Heart left ventricle (tissue), 16 donors: ENCODE measurements at regions of chr12 and their contacts with region 1.

Region 1: DNA sequence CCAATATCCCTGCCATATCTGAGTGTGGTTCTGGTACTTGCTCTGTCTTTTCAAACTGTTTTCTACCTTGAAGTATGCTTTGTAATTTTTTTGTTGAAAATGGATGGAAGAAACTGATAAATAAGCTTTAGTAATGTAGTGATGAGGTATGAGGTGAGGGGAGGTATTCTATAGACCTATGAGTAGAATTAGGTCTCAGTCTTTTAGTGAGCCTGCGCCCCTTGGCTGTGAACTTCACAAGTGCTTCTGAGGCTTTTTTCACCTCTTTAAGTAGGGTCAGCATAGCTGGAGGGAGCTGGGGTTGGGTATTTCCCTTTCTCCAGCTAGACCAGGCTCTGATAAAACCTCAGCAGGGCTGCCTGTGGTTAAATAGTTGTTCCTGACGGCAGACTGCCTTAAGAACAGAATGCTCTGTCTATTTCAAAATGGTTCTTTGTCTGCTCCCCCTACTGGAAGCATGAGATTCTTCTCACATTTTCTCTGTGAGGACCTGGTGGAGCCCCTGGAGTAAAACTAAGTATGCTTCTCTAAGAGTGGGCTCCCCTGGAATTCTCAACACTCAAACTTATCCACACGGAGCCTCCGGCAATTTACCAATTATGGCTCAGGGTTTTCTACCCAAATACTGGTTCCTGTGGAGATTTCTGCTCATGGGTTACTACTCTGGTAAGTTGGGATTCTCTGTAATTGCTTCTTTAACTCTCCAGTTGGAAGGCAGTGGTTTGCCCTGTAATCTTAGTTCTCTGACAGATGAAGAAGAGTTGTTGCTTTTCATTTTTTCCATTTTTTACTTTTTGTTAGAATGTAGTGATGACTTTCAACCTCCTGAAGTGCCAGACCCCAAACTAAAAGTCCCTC is 13.1 kb downstream of the KRT5 start:
- DNase-seq: no peak
- ATAC-seq: peak in 3 of 4 donors; percentile 39 to 69 (median 51)
- H3K4me3 ChIP-seq: no peak overlapping the region
- H3K27ac ChIP-seq: no peak overlapping the region
- H3K4me1 ChIP-seq: peaks cover 0 to 3% (median 0%) of the 10 kb centered on the region in 12 donors
- H3K27me3 ChIP-seq: peaks cover 0 to 29% (median 0%) of the 10 kb centered on the region in 9 donors
- CTCF ChIP-seq: peak; percentile 31 to 63 (median 49)
- POLR2A ChIP-seq: no peak

Region 2: GRCh38 chr12:52390739-52391617 is 116.1 kb before region 1 on chr12:
- intact Hi-C with region 1: loop called in 3 of 10 experiments (anchors 5 to 10 kb)
- DNase-seq: no peak
- ATAC-seq: peak in 3 of 4 donors; percentile 5 to 30 (median 8)
- H3K4me3 ChIP-seq: no peak overlapping the region
- H3K27ac ChIP-seq: no peak overlapping the region
- H3K4me1 ChIP-seq: peaks cover 0 to 14% (median 0%) of the 10 kb centered on the region in 12 donors
- H3K27me3 ChIP-seq: peaks cover 0 to 3% (median 0%) of the 10 kb centered on the region in 9 donors
- CTCF ChIP-seq: peak in 11 of 12 donors; percentile 22 to 45 (median 36)
- POLR2A ChIP-seq: no peak

Region 3: GRCh38 chr12:52561880-52562449 is 54.9 kb after region 1 on chr12:
- intact Hi-C with region 1: no loop called
- DNase-seq: no peak
- ATAC-seq: no peak
- H3K4me3 ChIP-seq: no peak overlapping the region
- H3K27ac ChIP-seq: no peak overlapping the region
- H3K4me1 ChIP-seq: peaks cover 0 to 9% (median 0%) of the 10 kb centered on the region in 12 donors
- H3K27me3 ChIP-seq: peaks cover 0 to 15% (median 0%) of the 10 kb centered on the region in 9 donors
- CTCF ChIP-seq: no peak
- POLR2A ChIP-seq: no peak

Region 4: GRCh38 chr12:52603314-52603713 is 96.2 kb after region 1 on chr12:
- intact Hi-C with region 1: no loop called
- DNase-seq: no peak
- ATAC-seq: no peak
- H3K4me3 ChIP-seq: no peak overlapping the region
- H3K27ac ChIP-seq: no peak overlapping the region
- H3K4me1 ChIP-seq: no peaks in the 10 kb centered on the region
- H3K27me3 ChIP-seq: peaks cover 12 to 71% (median 38%) of the 10 kb centered on the region in 9 donors
- CTCF ChIP-seq: no peak
- POLR2A ChIP-seq: no peak

Region 5: GRCh38 chr12:52895061-52895887 is 388.2 kb after region 1 on chr12:
- intact Hi-C with region 1: no loop called
- DNase-seq: no peak
- ATAC-seq: peak in 2 of 4 donors; percentile 26 to 35
- H3K4me3 ChIP-seq: no peak overlapping the region
- H3K27ac ChIP-seq: no peak overlapping the region
- H3K4me1 ChIP-seq: peaks cover 0 to 5% (median 0%) of the 10 kb centered on the region in 12 donors
- H3K27me3 ChIP-seq: no peaks in the 10 kb centered on the region
- CTCF ChIP-seq: no peak
- POLR2A ChIP-seq: no peak